PC-9 (cell line): ENCODE measurements at regions of chr7 and their contacts with region 1.

Region 1: GRCh38 chr7:100132697-100133151 is 6.0 kb downstream of the MBLAC1 start:
- DNase-seq: peak; percentile 49 to 74
- H3K4me3 ChIP-seq: no peak overlapping the region
- H3K27ac ChIP-seq: no peak overlapping the region
- H3K4me1 ChIP-seq: peaks cover 17% of the 10 kb centered on the region
- H3K27me3 ChIP-seq: no peaks in the 10 kb centered on the region
- CTCF ChIP-seq: peak; percentile 89

Region 2: GRCh38 chr7:99997545-99998137 is 135.1 kb before region 1 on chr7:
- CTCF ChIA-PET with region 1: interaction called, 9 read pairs
- POLR2A ChIA-PET with region 1: no interaction called
- intact Hi-C with region 1: loop called (anchors 1 kb)
- DNase-seq: no peak
- H3K4me3 ChIP-seq: no peak overlapping the region
- H3K27ac ChIP-seq: no peak overlapping the region
- H3K4me1 ChIP-seq: 0 out of 2 replicates have a peak, but pooled peaks cover 3% of the 10 kb centered on the region
- H3K27me3 ChIP-seq: peaks cover 44% of the 10 kb centered on the region
- CTCF ChIP-seq: no peak

Region 3: GRCh38 chr7:100089458-100090196 is 43.1 kb before region 1 on chr7:
- CTCF ChIA-PET with region 1: interaction called, 17 read pairs
- POLR2A ChIA-PET with region 1: no interaction called
- intact Hi-C with region 1: no loop called
- DNase-seq: no peak
- H3K4me3 ChIP-seq: peak overlapping the region; percentile 86
- H3K27ac ChIP-seq: peak overlapping the region; percentile 62
- H3K4me1 ChIP-seq: peaks cover 26% of the 10 kb centered on the region
- H3K27me3 ChIP-seq: no peaks in the 10 kb centered on the region
- CTCF ChIP-seq: no peak

Region 4: GRCh38 chr7:100177045-100178001 is 44.6 kb after region 1 on chr7 and contains the starts of genes GPC2 and STAG3:
- CTCF ChIA-PET with region 1: interaction called, 10 read pairs
- POLR2A ChIA-PET with region 1: no interaction called
- intact Hi-C with region 1: no loop called
- DNase-seq: peak; percentile 81 to 98
- H3K4me3 ChIP-seq: peak within 1 kb of the TSS; percentile 88
- H3K27ac ChIP-seq: no peak within 1 kb of the TSS
- H3K4me1 ChIP-seq: 0 out of 2 replicates have a peak, but pooled peaks cover 6% of the 10 kb centered on the region
- H3K27me3 ChIP-seq: no peaks in the 10 kb centered on the region; the same call in 1 of the 2 replicates
- CTCF ChIP-seq: no peak
- total RNA-seq, gene GPC2: 4.5 and 10.0 TPM in 2 replicates
- total RNA-seq, gene STAG3: 0.83 and 1.4 TPM in 2 replicates

Region 5: DNA sequence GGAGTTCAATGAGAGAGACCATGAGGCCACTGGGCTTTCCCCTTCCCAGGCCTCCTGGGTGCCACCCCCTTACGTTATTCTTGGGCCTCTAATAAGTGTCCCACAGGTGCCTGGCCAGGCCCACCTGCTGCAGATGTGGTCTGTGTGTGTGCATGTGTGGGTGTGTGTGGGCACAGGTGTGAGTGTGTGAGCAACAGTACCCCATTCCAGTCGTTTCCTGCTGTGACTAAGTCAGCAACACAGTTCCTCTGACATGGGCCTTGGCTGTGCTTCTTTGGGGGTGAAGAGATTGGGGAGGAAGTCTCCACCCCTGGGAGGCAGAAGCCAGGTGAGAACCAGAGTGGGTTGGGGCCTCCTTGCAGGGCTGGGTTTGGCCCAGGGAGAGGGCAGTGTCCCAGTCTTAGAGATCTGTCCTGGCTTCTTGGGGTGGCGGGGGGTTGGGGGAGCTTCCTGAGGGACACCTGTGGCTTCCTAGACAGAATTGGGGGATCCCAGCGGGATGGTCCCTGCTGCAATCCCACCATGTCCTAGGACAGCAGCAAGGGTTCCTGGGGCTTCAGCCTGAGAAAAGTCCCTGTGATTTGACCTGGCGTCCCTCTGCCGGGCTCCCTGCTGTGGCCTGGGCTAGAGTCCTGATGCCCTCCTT is 221.1 kb after region 1 on chr7:
- CTCF ChIA-PET with region 1: no interaction called
- POLR2A ChIA-PET with region 1: no interaction called
- intact Hi-C with region 1: loop called (anchors 5 kb)
- DNase-seq: no peak
- H3K4me3 ChIP-seq: no peak overlapping the region
- H3K27ac ChIP-seq: no peak overlapping the region
- H3K4me1 ChIP-seq: no peaks in the 10 kb centered on the region
- H3K27me3 ChIP-seq: no peaks in the 10 kb centered on the region
- CTCF ChIP-seq: no peak

Region 6: DNA sequence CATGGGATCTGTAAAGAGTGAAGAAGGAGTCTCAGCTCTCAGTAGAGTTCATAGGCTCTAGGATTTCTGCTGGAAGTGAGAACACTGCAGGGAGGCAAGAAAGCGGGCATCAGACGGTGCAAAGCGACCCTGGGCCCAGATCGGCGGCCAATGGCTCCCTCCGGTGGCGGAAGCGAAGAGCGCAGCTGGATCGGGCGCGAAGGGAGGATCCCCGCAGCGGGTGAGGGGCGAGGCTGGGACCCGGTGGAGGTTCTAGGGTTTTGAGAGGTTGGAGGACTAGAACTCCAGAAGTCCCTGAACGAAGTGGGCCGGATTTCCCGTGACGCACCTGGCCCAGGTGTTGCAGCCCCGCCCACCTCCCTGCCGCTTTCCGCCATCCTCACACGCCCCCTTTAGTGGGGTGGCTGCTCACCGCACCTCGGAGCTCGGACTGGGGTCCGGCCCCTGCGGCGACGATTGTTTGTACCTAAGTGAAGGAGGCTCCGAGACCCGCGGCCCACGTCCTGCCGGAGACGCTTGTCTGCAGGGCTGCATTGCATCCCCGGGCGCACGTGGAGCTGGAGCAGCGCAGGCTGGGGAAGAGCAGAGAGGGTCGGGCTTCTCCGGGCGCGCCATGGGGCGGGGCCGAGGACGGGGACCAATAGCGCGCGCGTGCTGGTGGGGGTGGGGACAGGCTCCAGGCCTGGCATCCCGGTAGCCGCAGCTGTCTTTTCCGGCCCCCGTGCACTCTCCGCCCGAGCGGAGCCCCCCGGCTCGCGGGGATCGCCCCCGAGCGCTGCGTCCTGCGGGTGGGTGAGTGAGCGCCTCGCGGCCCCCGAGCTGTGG is 719.5 kb after region 1 on chr7 and contains the start of gene SLC12A9:
- CTCF ChIA-PET with region 1: no interaction called
- POLR2A ChIA-PET with region 1: no interaction called
- intact Hi-C with region 1: loop called (anchors 10 kb)
- DNase-seq: peak; percentile 76 to 93
- H3K4me3 ChIP-seq: peak within 1 kb of the TSS; percentile 97
- H3K27ac ChIP-seq: no peak within 1 kb of the TSS
- H3K4me1 ChIP-seq: peaks cover 9% of the 10 kb centered on the region
- H3K27me3 ChIP-seq: no peaks in the 10 kb centered on the region
- CTCF ChIP-seq: peak; percentile 95
- total RNA-seq, gene SLC12A9: 34.7 and 36.7 TPM in 2 replicates